Activated T-helper 1 cell treated with anti-CD3 and anti-CD28 coated beads, Interleukin-12 subunit alpha, Interleukin-12 subunit beta, Interleukin-2, Interleukin-4 antibody, amounts not matched to agents 30 ng/mL and 10 ng/mL and 1 ng/mL, durations not matched to agents 14 hours and 24 hours and 36 hours (primary cell): ENCODE measurements at regions of chr1 and their contacts with region 1.

Region 1: GRCh38 chr1:67339623-67340343 is 32.1 kb downstream of the IL12RB2 start:
- DNase-seq: peak; percentile 47
- H3K4me3 Mint-ChIP-seq: peak overlapping the region; percentile 66
- H3K27ac Mint-ChIP-seq: peak overlapping the region; percentile 90
- H3K4me1 Mint-ChIP-seq: peaks cover 80% of the 10 kb centered on the region
- H3K27me3 Mint-ChIP-seq: no peaks in the 10 kb centered on the region

Region 2: DNA sequence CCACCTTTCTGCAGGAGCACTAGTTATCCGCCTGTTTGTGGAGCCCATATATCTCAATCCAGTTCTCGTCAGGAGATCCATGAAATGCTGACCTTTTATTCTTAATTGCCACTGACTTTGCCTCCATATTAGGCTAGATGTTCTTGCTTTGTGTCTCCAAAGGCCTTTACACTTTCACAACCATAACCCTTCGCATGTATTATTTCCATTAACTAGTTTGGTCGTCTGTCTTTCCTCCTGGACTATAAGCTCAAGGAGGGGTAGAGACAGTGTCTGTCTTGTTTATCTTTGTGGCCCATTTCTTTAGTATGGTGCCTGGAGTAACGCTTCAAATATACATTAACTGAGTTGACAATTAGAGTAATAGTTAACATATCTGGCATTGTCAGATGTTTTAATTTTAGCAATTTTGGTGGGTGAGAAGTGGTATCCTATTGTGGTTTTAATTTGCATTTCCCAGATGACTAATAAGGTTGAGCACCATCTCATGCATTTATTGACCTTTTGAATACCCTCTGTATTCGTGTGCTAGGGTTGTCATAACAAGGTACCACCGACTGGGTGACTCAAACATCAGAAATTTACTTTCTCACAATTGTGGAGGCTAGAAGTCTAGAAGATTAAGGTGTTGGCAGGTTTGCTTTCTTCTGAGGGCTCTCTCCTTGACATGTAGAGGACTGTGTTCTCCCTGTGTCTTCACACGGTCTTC is 53.8 kb before region 1 on chr1:
- intact Hi-C with region 1: loop called (anchors 1 kb)
- DNase-seq: no peak
- H3K4me3 Mint-ChIP-seq: peak overlapping the region; percentile 5
- H3K27ac Mint-ChIP-seq: peak overlapping the region; percentile 79
- H3K4me1 Mint-ChIP-seq: peaks cover 61% of the 10 kb centered on the region
- H3K27me3 Mint-ChIP-seq: no peaks in the 10 kb centered on the region

Region 3: DNA sequence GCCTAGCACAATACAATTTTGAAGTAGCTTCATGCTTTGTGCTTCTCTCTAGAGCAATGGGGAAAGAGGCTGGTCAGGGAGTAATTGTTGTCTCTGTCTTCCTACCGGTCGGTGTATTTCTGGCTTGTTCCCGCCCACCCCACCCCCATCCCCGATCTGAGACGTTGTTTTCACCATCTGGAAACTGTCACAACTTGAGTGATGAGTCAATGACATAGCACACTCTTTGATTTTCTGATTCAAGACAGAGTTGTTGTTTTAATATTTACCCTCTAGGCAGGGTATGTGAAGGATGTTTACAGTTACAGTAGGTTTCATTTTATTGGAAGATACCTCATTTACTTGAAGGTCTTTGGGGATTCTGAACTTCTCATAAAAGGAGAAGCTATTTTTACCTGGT is 25.1 kb before region 1 on chr1:
- intact Hi-C with region 1: loop called (anchors 1 kb)
- DNase-seq: no peak
- H3K4me3 Mint-ChIP-seq: peak overlapping the region; percentile 100
- H3K27ac Mint-ChIP-seq: peak overlapping the region; percentile 97
- H3K4me1 Mint-ChIP-seq: peaks cover 6% of the 10 kb centered on the region
- H3K27me3 Mint-ChIP-seq: no peaks in the 10 kb centered on the region

Region 4: DNA sequence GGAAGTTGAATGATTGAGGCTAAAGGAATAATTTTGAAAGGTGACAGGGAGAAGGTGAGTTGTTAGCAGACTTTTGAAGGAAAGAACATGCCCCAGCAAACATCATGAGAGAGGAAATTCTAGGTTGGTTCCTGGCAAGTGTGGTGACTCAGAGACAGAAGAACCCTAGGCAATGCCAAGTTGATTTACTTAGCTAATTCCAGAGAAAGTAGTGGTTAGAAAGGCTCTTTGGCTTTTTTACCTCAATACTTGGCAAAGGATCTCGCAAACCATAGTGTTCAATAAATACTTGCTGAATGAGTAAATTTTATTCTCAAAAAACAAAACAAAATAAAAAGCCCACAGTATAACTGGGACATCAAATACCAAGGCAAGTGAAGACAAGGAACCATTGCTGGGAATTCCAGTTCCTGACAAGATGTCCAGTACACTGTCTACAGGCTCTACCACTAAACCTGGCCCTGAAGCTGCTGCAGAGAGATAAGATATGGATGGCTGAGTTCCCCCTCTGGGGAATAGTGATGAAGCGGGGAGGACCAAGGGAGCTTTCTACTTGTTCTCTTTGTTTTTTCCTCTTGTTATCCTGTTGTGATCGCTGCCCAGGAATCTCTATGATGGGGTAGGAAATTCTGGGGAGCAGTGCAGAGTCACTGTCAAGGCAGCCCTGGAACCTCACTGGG is 16.1 kb after region 1 on chr1:
- intact Hi-C with region 1: loop called (anchors 2 kb)
- DNase-seq: no peak
- H3K4me3 Mint-ChIP-seq: no peak overlapping the region
- H3K27ac Mint-ChIP-seq: peak overlapping the region; percentile 62
- H3K4me1 Mint-ChIP-seq: peaks cover 61% of the 10 kb centered on the region
- H3K27me3 Mint-ChIP-seq: no peaks in the 10 kb centered on the region

Region 5: GRCh38 chr1:67404212-67404620 is 64.4 kb after region 1 on chr1:
- intact Hi-C with region 1: no loop called
- DNase-seq: no peak
- H3K4me3 Mint-ChIP-seq: no peak overlapping the region
- H3K27ac Mint-ChIP-seq: no peak overlapping the region
- H3K4me1 Mint-ChIP-seq: peaks cover 24% of the 10 kb centered on the region
- H3K27me3 Mint-ChIP-seq: no peaks in the 10 kb centered on the region